Activated T-helper 2 cell treated with anti-CD3 and anti-CD28 coated beads, Interferon-gamma antibody, Interleukin-2, Interleukin-4, amounts not matched to agents 10 μg/mL and 5 μg/mL and 100 μg/mL, durations not matched to agents 14 hours and 24 hours and 36 hours (primary cell): ENCODE measurements at regions of chr3 and their contacts with region 1.

Region 1: DNA sequence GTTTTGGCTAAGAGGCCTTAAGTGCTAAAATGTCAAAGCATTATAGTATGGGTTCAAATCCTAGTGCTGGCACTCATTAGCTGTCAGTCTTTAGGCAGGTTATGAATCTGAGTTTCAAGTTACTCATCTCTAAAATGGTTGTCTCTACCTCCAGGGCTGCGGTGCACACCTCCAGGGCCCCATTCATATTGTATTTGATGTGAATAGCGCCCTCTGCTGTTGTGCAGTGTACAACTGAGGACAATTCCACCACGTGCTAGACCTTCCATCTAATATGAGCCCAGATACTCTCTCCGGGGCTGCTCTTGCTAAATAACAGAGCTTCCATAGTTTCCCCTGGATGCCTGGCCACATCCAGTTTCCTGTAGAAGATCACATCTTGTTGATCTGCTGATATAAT is 54.3 kb downstream of the OXNAD1 start:
- DNase-seq: peak; percentile 72
- H3K4me3 Mint-ChIP-seq: no peak overlapping the region
- H3K27ac Mint-ChIP-seq: peak overlapping the region; percentile 67
- H3K4me1 Mint-ChIP-seq: peaks cover 49% of the 10 kb centered on the region
- H3K27me3 Mint-ChIP-seq: no peaks in the 10 kb centered on the region

Region 2: DNA sequence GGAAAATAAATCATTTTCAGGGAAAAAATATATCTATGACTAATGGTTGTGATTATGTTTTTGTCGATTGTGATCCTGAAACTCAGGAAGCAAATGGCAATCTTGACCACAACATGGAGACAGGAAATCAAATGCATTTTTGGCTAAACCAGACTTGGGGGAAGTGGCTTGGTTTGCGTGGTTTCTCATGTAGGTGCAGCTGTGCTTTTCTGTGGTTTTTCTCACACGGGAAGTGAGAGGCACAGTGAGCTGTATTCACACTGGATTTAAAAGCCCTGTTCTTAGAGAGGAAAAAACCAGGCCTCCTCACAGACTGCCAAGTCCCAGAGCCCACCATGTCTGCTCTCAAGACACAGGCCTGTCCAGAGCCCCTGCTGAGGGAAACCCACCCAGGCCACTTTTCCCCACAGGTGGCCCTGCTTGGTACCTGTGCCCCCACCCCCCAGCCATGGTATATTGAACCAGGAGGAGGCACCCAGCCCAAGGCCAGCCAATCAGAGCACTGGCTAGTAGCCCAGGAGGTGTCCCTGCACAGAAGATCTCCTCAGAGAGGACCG is 671.6 kb before region 1 on chr3:
- intact Hi-C with region 1: no loop called
- DNase-seq: peak; percentile 62
- H3K4me3 Mint-ChIP-seq: peak overlapping the region; percentile 52
- H3K27ac Mint-ChIP-seq: peak overlapping the region; percentile 73
- H3K4me1 Mint-ChIP-seq: peaks cover 44% of the 10 kb centered on the region
- H3K27me3 Mint-ChIP-seq: no peaks in the 10 kb centered on the region

Region 3: GRCh38 chr3:15997274-15997943 is 321.9 kb before region 1 on chr3:
- intact Hi-C with region 1: no loop called
- DNase-seq: no peak
- H3K4me3 Mint-ChIP-seq: no peak overlapping the region
- H3K27ac Mint-ChIP-seq: no peak overlapping the region
- H3K4me1 Mint-ChIP-seq: peaks cover 6% of the 10 kb centered on the region
- H3K27me3 Mint-ChIP-seq: no peaks in the 10 kb centered on the region

Region 4: GRCh38 chr3:16264708-16265454 is 54.4 kb before region 1 on chr3 and contains the starts of genes DPH3 and OXNAD1:
- intact Hi-C with region 1: loop called (anchors 1 kb)
- DNase-seq: peak; percentile 99
- H3K4me3 Mint-ChIP-seq: peak within 1 kb of the TSS; percentile 96
- H3K27ac Mint-ChIP-seq: peak within 1 kb of the TSS; percentile 95
- H3K4me1 Mint-ChIP-seq: peaks cover 20% of the 10 kb centered on the region
- H3K27me3 Mint-ChIP-seq: no peaks in the 10 kb centered on the region
- total RNA-seq, gene DPH3: 22.7 and 23.1 TPM in 2 replicates
- total RNA-seq, gene OXNAD1: 18.7 and 20.5 TPM in 2 replicates